ENCODE measurements at regions of chr7 and their contacts with region 1.

Region 1: DNA sequence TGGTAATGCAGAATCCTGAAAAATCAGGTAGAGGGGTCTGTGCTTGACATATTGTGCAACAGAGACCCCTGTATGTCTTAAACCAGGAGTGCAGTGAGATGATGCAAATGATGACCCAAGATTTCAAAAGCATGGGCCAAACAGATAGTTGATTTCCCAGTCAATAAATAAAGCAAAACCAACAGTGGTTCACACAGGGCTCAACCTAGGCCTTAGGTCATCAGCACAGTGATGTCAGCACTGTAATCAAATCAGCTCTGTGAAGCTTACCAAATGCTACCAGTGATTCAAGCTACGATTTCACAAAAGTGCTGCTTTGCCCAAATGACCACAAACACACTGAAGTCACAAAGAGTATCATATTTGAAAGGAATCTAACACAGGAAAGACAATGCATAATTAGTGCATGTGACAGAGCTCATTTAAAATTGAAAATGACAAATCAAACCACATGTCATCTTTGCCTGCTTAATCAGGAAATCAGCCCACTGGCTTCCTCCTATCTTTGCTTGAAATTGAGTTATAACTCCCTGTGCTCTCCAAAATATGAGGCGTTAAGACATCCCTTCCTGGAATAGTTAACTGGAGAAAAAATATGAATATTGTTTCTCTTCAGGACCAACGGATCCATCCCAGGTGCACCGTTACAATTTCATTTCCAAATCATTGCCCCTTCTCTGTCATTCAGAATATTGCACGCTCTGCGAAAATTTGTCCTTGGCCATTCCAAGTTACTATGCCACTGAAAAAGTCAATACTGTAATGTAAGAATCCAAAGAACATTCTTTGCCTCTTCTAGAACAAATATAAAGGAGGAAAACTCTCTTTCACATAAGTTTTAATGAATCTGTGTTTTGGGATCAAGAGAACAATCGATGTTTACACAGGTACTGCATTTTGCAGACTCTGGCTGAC is 41.9 kb upstream of the ASL start:
- DNase-seq: no peak
- H3K4me3 ChIP-seq: no peak overlapping the region
- H3K27ac ChIP-seq: no peak overlapping the region
- H3K4me1 ChIP-seq: no peaks in the 10 kb centered on the region
- H3K27me3 ChIP-seq: no peaks in the 10 kb centered on the region
- CTCF ChIP-seq: no peak

Region 2: GRCh38 chr7:65896279-65896870 is 137.4 kb before region 1 on chr7:
- CTCF ChIA-PET with region 1: no interaction called
- dilution Hi-C with region 1: no loop called
- in situ Hi-C with region 1: no loop called
- intact Hi-C with region 1: no loop called
- DNase-seq: no peak
- H3K4me3 ChIP-seq: no peak overlapping the region
- H3K27ac ChIP-seq: no peak overlapping the region
- H3K4me1 ChIP-seq: no peaks in the 10 kb centered on the region
- H3K27me3 ChIP-seq: no peaks in the 10 kb centered on the region
- CTCF ChIP-seq: no peak

Region 3: DNA sequence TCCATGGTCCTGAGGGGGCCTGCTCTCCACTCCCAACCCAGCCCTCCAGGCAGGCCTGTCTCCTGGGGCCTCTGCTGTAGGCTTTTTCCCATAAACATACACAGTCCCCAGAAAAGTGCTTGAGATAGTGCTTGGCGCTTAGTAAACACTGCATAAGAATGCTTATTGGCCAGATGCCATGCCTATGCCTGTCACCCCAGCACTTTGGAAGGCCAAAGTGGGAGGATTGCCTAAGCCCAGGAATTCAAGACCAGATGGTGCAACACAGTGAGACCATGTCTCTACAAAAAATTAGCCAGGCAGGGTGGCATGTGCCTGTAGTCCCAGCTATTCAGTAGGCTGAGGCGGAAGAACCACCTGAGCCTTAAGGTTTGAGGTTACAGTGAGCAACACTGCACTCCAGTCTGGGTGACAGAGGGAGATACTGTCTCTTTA is 17.3 kb after region 1 on chr7:
- CTCF ChIA-PET with region 1: no interaction called
- dilution Hi-C with region 1: no loop called
- in situ Hi-C with region 1: no loop called
- intact Hi-C with region 1: loop called (anchors 1 kb)
- DNase-seq: peak; percentile 95
- H3K4me3 ChIP-seq: no peak overlapping the region
- H3K27ac ChIP-seq: no peak overlapping the region
- H3K4me1 ChIP-seq: peaks cover 11% of the 10 kb centered on the region
- H3K27me3 ChIP-seq: no peaks in the 10 kb centered on the region
- CTCF ChIP-seq: no peak

Region 4: DNA sequence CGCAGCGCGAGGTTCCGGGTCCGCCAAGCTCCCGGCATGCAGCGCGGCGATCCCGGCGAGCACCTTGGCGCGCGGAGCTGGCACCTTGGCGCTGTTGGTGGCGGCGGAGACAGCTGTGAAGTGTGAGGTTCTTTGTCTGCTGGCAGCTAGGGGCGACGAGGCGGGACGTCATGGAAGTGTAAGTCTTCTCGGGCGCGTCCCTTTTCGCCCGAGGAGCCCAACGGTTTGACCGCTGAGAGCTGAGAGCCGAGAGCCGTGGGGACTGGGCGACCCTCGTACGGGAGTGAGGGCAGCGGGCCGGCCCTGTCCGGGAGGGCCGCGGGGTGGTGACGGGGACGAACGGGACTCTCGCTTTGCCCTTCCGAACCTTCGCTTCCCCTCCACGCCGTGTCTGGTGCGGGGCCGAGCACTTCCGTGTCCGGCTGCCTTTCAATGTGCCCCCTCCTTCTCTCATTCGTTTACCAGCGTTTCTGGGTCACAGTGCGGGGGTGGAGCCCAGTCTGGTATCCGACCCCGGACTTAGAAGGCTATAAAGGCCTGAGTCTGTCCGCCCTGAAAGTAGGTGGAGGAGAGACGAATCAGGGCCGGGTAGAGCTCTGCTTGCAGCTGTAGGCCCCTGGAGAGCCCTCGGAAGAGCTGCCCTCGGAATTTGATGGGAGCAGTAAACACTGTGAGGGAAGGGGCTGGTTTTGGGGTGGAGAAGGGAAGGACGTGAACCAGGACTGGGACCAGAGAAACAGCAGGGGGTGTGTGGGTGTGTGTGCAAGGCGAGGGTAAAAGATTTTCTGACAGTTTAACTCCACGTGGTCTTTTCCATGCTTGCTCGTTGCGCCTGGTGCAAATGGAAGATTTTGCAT is 81.3 kb after region 1 on chr7 and contains the start of gene CRCP:
- CTCF ChIA-PET with region 1: no interaction called
- dilution Hi-C with region 1: no loop called
- in situ Hi-C with region 1: no loop called
- intact Hi-C with region 1: loop called (anchors 5 kb)
- DNase-seq: peak; percentile 75
- H3K4me3 ChIP-seq: peak within 1 kb of the TSS; percentile 84 to 91 (median 87)
- H3K27ac ChIP-seq: peak within 1 kb of the TSS; percentile 83
- H3K4me1 ChIP-seq: peaks cover 18% of the 10 kb centered on the region
- H3K27me3 ChIP-seq: no peaks in the 10 kb centered on the region
- CTCF ChIP-seq: peak; percentile 33 to 42
- total RNA-seq, gene CRCP: 34.7 to 35.3 TPM

Region 5: GRCh38 chr7:66198469-66198868 is 164.7 kb after region 1 on chr7:
- CTCF ChIA-PET with region 1: no interaction called
- dilution Hi-C with region 1: no loop called
- in situ Hi-C with region 1: no loop called
- intact Hi-C with region 1: no loop called
- DNase-seq: no peak
- H3K4me3 ChIP-seq: no peak overlapping the region
- H3K27ac ChIP-seq: no peak overlapping the region
- H3K4me1 ChIP-seq: no peaks in the 10 kb centered on the region
- H3K27me3 ChIP-seq: no peaks in the 10 kb centered on the region
- CTCF ChIP-seq: no peak

Region 6: DNA sequence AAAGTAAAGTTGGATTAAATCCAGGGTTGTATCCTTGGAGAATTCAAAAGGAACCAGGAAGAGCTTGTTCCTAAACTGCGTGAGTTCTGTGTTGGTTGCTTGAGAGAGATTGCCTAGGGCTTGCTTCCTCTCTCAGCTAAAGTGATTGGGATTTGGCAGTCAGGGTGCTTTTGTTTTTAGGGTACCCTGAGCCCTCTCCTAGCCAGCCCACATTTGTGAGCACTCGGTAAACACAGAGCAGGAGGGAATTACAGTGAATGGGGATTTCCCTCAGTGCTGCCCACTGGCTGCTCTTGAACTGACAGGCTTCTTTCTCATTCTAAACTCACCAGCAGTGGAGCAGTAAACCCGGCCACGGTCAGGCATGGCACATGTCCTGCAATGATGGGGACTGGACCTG is 318.3 kb after region 1 on chr7:
- CTCF ChIA-PET with region 1: no interaction called
- dilution Hi-C with region 1: no loop called
- in situ Hi-C with region 1: no loop called
- intact Hi-C with region 1: loop called (anchors 10 kb)
- DNase-seq: peak; percentile 76
- H3K4me3 ChIP-seq: peak overlapping the region in 2 of 3 experiments; percentile 31 to 38
- H3K27ac ChIP-seq: peak overlapping the region; percentile 92
- H3K4me1 ChIP-seq: peaks cover 55% of the 10 kb centered on the region
- H3K27me3 ChIP-seq: no peaks in the 10 kb centered on the region
- CTCF ChIP-seq: no peak

Region 7: GRCh38 chr7:66503551-66504031 is 469.9 kb after region 1 on chr7:
- CTCF ChIA-PET with region 1: interaction called, 26 read pairs
- dilution Hi-C with region 1: no loop called
- in situ Hi-C with region 1: no loop called
- intact Hi-C with region 1: no loop called
- DNase-seq: no peak
- H3K4me3 ChIP-seq: no peak overlapping the region
- H3K27ac ChIP-seq: no peak overlapping the region
- H3K4me1 ChIP-seq: no peaks in the 10 kb centered on the region
- H3K27me3 ChIP-seq: no peaks in the 10 kb centered on the region
- CTCF ChIP-seq: no peak